ENCODE measurements at regions of chr16 and their contacts with region 1.

Region 1: DNA sequence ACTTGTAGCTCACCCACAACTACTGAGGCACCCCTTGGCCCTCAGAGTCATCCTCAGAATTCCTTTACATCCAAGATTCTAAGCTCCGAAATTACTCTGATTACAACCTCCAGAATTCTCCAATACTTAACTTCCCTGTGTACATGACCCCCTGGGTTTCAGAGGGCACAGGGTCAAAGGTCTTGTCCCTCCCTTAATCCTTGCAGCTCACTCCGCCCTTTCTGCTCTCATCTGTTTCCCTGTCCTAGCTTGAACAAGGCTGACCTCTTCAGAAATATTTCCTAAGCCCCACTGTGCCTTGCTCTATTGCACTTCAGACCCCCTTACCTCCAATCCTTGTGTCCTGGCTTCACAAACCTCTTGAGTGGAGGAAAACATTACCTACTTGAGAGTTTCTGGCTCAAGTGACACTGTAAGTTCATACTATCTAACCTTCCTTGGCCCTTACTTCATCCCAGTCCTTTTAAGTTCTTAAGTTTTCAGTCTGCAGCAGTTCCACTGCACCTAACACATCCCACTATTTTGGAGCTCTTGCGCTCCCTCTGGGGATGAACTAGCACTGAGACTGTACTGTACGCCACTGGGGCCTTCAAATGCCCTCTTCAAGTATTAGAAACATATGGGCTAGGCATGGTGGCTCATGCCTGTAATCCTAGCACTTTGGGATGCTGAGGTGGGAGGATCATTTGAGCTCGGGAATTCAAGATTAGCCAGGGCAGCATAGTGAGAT is 6.2 kb downstream of the N4BP1 start:
- DNase-seq: no peak
- ATAC-seq: peak; percentile 11

Region 2: GRCh38 chr16:47873434-47873833 is 730.4 kb before region 1 on chr16:
- intact Hi-C with region 1: no loop called
- DNase-seq: no peak
- ATAC-seq: no peak

Region 3: GRCh38 chr16:48556913-48557351 is 46.9 kb before region 1 on chr16:
- intact Hi-C with region 1: loop called (anchors 5 kb)
- DNase-seq: no peak
- ATAC-seq: peak; percentile 14

Measured in left ventricle myocardium superior (tissue), 1 donor.